Activated CD8-positive, alpha-beta memory T cell treated with anti-CD3 and anti-CD28 coated beads, Interleukin-2, amount 10 ng/mL, durations not matched to agents 7 days and 5 days (primary cell): ENCODE measurements at regions of chr1 and their contacts with region 1.

Region 1: DNA sequence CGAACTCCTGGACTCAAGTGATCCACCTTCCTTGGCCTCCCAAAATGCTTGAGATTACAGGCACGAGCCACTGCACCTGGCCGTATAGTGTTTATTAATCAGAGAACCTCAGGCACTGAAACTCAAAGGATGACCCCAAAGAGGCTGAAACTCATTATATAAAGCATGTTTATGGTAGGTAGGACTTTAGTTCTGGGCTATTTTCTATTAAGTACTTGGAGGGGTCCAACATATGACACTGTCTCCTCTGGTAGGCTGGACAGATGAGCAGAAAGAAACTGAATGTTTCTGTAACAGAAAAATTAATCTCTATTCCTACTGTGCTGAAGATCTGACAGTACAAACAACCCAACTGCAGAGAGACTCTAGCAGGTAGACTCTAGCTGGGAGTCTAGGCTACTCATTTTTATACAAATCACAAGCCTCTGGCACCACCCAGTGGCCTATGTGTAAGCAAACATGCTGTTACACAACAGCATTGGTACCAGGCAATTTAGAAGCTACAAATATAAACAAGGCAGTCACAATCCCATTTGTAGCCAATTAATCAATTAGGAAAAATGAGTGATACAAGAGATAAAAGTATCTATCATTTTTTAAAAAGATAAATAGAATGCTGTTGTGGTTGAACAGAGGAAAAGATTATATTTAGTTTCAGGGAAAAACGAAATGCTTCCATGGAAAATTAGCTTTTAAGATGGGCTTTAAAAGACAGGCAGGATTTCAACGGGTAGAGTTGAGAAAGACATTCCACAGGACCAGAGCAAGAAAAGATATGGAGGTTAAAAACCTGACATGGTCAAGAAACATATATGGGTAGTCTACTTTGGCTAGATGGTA is 10.4 kb downstream of the DCAF8 start:
- DNase-seq: peak; percentile 74
- ATAC-seq: peak; percentile 92
- H3K4me3 Mint-ChIP-seq: no peak overlapping the region
- H3K27ac Mint-ChIP-seq: no peak overlapping the region
- H3K4me1 Mint-ChIP-seq: peaks cover 11% of the 10 kb centered on the region
- H3K27me3 Mint-ChIP-seq: no peaks in the 10 kb centered on the region

Region 2: DNA sequence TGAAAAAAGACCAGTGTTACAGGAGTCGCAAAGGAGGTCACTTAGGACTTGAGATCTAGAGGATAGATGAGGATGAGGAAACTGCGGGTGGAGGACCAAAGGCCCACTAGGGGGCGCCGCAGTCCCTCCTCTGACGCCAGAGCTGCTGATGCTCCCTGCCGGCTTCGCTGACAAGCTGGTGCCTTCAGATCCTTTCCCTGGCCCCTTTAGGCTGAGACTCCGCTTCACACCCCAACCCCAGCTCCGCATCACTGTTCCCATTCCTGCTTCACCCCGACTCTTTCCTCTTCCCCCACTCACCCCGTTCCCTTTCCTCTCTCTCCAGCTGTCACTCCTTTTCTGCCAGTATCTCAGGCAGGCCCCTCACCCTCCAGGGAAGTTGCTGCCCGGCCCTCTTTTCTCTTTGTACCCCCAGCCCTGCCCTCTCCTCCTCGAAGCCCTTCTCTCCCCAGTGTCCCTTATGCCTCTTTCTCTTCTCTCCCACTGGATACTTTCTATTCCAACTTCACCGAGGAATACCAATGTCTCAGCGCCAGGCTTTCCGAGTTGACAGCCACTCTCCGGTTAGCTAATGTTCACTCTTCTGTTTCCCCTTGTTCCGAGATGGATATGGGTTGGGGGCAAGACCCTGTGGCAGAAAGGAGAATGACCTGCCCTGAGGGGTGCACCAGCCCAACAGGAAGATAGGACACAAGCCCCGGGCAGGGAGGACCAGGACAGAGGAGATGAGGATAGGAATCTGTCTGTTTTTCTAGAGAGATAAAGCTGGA is 166.0 kb before region 1 on chr1:
- CTCF ChIA-PET with region 1: interaction called, 10 read pairs
- DNase-seq: peak; percentile 83
- ATAC-seq: peak; percentile 61
- H3K4me3 Mint-ChIP-seq: no peak overlapping the region
- H3K27ac Mint-ChIP-seq: no peak overlapping the region
- H3K4me1 Mint-ChIP-seq: peaks cover 7% of the 10 kb centered on the region
- H3K27me3 Mint-ChIP-seq: peaks cover 24% of the 10 kb centered on the region

Region 3: GRCh38 chr1:160151303-160151702 is 100.6 kb before region 1 on chr1 and contains the start of gene ATP1A4:
- CTCF ChIA-PET with region 1: no interaction called
- DNase-seq: no peak
- ATAC-seq: no peak
- H3K4me3 Mint-ChIP-seq: no peak within 1 kb of the TSS
- H3K27ac Mint-ChIP-seq: no peak within 1 kb of the TSS
- H3K4me1 Mint-ChIP-seq: no peaks in the 10 kb centered on the region
- H3K27me3 Mint-ChIP-seq: peaks cover 24% of the 10 kb centered on the region
- total RNA-seq, gene ATP1A4: 0.40 TPM in 1 of 2 experiments, not detected in the other

Region 4: DNA sequence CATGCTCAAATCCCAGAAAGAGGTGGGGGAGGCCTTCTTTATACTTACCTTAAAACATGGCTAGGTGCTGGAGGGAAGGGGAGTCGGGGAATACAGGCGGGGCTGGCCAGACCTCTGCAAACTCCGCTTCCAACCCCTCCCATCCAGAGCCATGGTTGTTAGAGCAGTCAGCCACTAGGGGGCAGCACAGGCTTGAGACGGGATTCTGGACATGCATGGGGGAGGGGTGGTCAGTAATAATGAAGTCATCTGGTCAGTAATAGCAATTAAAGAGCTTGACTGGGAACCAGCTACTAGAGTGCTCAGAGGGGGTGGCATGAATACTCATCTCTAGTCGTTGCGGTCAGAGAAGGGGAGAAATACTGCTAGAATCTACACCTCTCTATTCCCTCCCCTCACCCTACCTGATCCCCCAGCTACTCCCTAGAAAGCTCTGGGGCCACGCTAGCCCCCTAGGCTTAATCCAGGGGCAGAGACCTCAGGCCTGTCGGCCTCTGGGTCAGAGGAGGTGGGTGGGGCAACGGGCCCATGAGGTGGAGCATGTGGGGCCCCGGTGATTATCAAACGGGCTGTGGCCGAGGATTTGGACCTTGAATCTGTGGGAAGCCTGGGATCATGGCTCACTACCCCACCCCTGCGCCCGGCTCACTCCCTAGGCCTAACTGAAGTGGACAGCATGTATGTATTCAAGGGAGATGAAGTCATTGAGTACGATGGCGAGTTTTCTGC is 58.7 kb before region 1 on chr1:
- CTCF ChIA-PET with region 1: interaction called, 46 read pairs
- DNase-seq: peak; percentile 84
- ATAC-seq: peak; percentile 73
- H3K4me3 Mint-ChIP-seq: no peak overlapping the region
- H3K27ac Mint-ChIP-seq: no peak overlapping the region
- H3K4me1 Mint-ChIP-seq: no peaks in the 10 kb centered on the region
- H3K27me3 Mint-ChIP-seq: no peaks in the 10 kb centered on the region

Region 5: DNA sequence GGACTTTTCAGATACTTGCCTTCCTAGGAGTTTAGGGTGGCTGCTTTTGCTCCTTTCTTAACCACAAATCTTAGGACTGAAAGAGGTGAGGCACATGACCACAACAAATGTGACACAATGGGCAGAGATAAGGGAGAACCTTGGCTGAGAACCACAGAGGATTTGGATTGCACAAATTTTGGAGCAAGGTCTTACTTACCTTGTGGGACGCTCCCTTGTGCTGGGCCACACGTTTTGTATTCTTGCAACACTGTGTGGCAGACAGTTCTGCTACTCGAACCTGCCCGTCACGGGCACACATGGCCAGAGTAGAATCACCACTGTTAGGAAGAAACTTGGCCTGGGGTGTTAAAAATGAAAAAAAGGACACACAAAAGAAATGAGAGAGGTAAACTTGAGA is 13.5 kb before region 1 on chr1:
- CTCF ChIA-PET with region 1: interaction called, 31 read pairs
- DNase-seq: no peak
- ATAC-seq: no peak
- H3K4me3 Mint-ChIP-seq: no peak overlapping the region
- H3K27ac Mint-ChIP-seq: no peak overlapping the region
- H3K4me1 Mint-ChIP-seq: peaks cover 2% of the 10 kb centered on the region
- H3K27me3 Mint-ChIP-seq: no peaks in the 10 kb centered on the region

Region 6: DNA sequence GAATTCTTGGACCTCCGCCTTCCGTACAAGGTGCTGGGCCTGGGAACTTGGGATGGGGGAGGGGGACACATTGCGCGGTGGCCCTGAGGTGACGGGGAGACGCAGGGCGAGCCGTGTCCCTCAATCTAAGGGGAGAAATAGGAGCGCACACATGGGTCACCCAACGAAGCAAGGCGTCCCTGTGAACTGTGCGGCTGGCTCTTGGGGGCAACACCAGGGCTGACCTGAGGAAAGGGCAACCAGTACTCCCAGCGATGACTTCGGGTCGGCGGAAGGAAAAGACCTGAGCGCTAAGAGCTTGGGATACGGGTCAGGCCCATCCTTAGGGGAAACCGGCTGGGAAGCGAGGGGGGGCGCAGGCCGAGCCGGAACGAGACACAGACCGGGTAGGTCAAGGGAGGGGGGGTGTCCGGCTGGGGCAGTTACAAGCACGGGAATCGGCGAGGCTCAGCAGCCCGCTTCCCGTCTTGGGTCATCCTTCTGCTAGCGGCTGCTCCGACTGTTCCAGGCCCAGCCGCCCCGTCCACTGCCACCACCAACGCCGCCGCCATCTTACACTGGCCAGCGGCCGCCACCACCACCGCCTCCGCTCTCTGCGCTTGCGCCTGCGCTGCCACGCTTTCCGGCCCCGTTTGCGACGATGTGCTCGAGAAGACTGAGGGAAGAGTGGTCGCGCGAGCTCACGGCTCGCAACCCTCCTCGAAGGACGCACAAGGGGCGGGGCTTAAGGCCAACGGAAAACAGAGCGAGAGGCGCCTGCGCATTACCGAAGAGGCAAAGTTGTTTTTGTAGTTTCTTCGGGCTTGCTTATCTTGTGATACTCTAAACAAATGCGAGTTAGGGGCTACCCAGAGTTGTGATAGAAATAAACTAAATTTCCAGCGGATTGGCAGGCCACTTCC is 10.2 kb after region 1 on chr1 and contains the start of gene DCAF8:
- CTCF ChIA-PET with region 1: interaction called, 15 read pairs
- DNase-seq: peak; percentile 99
- ATAC-seq: peak; percentile 91
- H3K4me3 Mint-ChIP-seq: peak within 1 kb of the TSS; percentile 91
- H3K27ac Mint-ChIP-seq: peak within 1 kb of the TSS; percentile 95
- H3K4me1 Mint-ChIP-seq: peaks cover 45% of the 10 kb centered on the region
- H3K27me3 Mint-ChIP-seq: no peaks in the 10 kb centered on the region
- total RNA-seq, gene DCAF8: 115 to 117 TPM